Motor neuron (in vitro differentiated cells): ENCODE measurements at regions of chr9 and their contacts with region 1.

Region 1: DNA sequence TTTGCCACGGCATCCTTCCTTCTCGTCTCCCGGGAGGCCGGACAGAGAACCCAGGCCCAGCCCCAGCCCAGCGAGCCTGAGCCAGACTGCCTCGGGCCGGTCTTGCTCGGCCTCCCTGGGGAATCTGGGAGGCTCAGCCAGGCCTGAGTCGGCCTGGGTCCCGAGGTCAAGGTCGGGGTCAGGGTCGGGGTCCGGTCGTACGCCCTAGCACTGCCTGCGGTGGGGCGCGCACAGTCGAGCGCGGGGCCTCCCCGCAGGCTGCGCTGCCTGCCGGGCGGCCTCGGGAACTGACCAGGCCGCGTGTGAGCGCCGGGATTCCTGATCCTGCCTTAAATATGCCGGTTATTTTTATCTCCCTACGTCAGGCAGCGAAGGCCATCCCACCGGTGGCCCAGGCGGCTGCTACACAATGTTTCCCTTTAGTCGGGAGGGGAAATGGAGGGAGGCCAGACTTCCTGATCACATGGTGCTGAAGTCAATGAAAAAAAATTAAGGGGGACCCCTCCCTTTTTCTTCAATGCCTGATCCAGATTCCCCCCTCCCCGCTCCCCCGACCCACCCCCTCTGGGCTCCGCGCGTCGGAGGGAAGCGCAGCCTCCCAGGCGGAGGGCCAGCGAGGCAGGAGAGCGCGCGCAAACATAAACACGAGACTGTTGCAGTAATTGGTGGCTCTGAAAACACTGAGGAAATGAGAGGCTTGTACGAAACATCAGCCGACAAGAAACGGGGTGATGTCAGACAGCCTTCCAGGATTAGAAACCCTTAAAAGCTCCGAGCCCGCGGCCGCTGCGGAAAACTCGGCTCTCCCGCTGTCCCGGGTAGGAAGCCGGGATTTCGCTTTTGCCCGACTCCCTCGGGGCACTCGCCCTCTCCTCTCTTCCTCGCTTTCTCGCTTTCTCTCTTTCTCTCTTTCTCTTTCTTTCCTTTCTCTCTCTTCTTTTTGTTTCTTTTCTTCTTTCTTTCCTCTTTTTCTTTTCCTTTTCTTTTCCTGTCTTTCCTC is 148.2 kb upstream of the KLF4 start:
- ATAC-seq: peak; percentile 87 to 94 (median 91)
- H3K4me3 ChIP-seq: peak overlapping the region; percentile 17 to 26 (median 24)
- H3K27ac ChIP-seq: peak overlapping the region in 1 of 2 donors; percentile 48
- H3K4me1 ChIP-seq: peaks cover 8 to 26% of the 10 kb centered on the region in 2 donors

Region 2: DNA sequence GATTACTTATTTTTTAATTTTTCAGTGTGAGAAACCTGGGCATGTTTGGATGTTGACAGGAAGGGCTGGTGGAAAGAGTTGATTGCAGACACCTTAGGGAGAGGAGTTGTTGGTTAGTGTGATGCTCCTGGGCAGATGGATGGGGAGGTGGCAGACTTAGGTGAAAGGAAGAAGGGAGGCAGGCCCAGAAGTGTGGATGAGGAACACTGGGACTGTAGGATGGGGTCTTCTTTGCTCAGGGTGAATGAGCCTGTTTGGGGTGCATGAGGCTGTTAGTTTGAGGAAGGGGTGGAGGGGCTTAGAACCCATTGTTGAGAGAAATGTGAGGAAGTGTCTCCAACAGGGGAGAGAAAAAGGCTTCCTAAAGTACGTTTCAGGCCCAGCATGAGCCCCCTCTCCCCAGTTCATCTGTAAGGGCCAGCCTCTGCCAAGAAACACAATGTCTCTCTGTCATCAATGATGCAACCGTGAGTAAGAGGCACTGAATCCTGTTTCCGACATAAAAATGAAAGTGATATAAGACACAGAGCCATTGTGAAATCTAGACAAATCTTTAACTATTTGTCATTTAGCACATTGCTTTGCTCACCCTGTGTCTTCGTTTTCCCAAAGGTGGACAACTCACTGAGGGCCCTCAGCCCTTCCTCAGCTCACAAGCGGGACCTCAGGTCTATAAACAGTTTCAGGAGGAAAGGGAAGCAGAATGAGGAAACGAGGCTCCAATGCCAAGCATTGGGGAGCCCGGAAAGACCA is 89.5 kb before region 1 on chr9:
- in situ Hi-C with region 1: loop called in 1 of 9 experiments (anchors 25 kb)
- ATAC-seq: peak in 7 of 8 experiments; percentile 70 to 98 (median 96)
- H3K4me3 ChIP-seq: no peak overlapping the region
- H3K27ac ChIP-seq: peak overlapping the region; percentile 54 to 91
- H3K4me1 ChIP-seq: peaks cover 12 to 20% of the 10 kb centered on the region in 2 donors

Region 3: DNA sequence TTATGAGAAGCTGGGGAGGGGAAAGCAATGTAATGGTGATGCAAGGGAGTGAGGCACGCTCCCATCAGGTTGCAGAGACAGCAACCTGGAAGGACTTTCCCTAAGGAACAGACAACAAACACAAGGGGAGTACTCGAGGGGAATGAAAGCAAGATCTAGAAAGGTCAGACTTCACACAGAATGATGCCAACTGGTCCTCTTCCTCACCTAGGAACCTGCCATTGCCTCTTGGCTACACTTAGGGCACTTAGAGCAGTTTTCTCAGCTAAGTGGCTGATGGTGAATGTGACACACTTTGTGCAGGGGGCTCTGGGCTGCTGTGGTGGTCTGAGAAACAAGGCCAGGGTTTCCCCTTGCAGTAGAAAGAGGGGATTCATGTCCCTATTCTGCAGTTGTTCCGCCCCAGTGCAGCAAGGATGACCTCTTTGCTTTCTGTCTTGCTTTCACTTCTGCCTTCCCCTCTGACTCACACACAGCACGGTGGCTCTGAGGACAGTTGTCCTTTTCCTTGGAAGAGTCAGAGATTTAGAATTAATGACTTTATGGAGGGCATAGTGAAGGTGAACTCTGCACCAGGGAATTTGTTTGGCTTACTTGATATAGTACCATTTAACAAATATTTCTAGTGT is 245.9 kb after region 1 on chr9:
- in situ Hi-C with region 1: no loop called
- ATAC-seq: peak in 6 of 8 experiments; percentile 30 to 66 (median 60)
- H3K4me3 ChIP-seq: no peak overlapping the region
- H3K27ac ChIP-seq: no peak overlapping the region
- H3K4me1 ChIP-seq: no peaks in the 10 kb centered on the region